ENCODE measurements at regions of chr22 and their contacts with region 1.

Region 1: DNA sequence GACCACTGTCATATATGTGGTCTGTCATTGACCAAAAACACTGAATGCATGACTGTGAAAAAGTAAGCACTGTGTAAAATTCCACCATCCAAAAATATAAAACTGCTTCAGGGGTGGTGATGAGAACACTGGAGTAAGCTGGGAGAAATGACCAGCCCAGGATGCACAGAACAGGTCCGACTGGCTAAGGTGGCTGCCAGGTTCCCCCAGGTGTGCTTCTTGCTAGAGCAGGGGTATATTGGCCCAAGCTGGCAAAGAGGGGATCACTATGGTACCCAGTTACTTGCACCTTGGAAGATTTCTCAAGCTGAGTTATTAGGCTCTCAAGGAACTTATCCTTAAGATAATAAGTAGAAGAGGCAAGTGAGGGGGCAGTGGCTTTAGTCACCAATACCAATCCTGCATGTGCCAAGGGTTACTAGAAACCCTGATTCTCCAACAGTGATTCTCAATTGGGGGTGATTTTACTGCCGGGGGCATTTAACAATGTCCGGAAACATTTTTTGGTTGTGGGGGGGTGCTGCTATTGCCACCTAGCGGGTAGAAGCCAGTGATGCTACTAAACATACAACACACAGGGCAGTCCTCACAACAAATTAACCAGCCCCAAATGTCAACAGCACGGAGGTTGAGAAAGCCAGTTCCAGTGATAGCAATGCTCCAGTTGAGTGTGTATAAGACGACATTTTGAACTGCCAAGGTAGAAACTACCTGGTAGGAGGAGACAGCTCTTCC is 15.7 kb downstream of the SNU13 start:
- H3K4me3 ChIP-seq: no peak overlapping the region
- H3K27ac ChIP-seq: peak overlapping the region; percentile 31; the same call in 1 of the 2 replicates
- H3K4me1 ChIP-seq: 0 out of 2 replicates have a peak, but pooled peaks cover 2% of the 10 kb centered on the region
- CTCF ChIP-seq: peak; percentile 61; the same call in 1 of the 2 replicates

Region 2: GRCh38 chr22:41501209-41501608 is 171.7 kb before region 1 on chr22:
- CTCF ChIA-PET with region 1: no interaction called
- POLR2A ChIA-PET with region 1: no interaction called
- H3K4me3 ChIP-seq: no peak overlapping the region
- H3K27ac ChIP-seq: no peak overlapping the region
- H3K4me1 ChIP-seq: no peaks in the 10 kb centered on the region
- CTCF ChIP-seq: no peak

Region 3: GRCh38 chr22:41642331-41643110 is 30.4 kb before region 1 on chr22:
- CTCF ChIA-PET with region 1: no interaction called
- POLR2A ChIA-PET with region 1: no interaction called
- H3K4me3 ChIP-seq: no peak overlapping the region
- H3K27ac ChIP-seq: no peak overlapping the region
- H3K4me1 ChIP-seq: no peaks in the 10 kb centered on the region
- CTCF ChIP-seq: no peak

Region 4: DNA sequence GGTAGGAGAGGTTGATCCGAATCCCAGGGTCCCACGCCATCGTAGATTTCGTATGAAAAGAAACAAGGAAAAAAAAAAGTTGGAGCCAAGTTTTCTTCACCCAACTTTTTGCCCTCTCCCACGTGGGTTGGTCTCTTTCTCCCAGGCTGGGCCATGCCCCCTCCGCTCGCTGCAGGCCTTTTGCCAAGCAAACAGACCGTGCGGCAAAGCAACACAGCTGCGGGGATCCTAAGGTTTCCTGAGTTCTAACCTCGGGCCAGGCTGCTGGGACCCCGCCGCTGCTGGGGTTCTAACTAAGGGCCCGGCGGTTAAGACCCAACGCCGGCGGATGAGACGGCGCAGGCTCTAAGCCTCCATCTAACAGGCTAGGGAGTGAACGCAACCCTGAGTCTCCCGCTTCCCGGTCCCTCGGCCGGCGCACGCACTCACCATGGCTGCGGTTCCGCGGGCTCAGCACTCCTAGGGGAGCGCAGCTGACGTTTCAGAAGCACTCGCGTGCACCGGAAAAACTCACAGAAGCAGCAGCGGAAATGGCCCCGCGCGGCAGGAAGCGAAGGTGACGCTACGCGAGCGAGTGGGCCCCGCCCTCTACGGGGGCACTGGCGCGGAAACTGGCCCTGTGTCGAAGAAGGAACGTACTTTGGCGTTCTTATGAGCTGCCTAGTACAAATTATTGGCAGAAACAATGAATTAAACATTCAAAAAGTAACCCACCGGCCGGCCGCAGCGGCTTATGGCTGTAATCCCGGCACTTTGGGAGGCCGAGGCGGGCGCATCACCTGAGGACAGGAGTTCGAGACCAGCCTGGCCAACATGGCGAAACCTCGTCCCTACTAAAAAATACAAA is 15.6 kb after region 1 on chr22 and contains the start of gene SNU13:
- CTCF ChIA-PET with region 1: interaction called, 3 read pairs
- POLR2A ChIA-PET with region 1: interaction called, 24 read pairs
- H3K4me3 ChIP-seq: peak within 1 kb of the TSS; percentile 87
- H3K27ac ChIP-seq: peak within 1 kb of the TSS; percentile 92
- H3K4me1 ChIP-seq: no peaks in the 10 kb centered on the region
- CTCF ChIP-seq: peak; percentile 66; the same call in 1 of the 2 replicates